Naive thymus-derived CD4-positive, alpha-beta T cell (primary cell): ENCODE measurements at regions of chr5 and their contacts with region 1.

Region 1: DNA sequence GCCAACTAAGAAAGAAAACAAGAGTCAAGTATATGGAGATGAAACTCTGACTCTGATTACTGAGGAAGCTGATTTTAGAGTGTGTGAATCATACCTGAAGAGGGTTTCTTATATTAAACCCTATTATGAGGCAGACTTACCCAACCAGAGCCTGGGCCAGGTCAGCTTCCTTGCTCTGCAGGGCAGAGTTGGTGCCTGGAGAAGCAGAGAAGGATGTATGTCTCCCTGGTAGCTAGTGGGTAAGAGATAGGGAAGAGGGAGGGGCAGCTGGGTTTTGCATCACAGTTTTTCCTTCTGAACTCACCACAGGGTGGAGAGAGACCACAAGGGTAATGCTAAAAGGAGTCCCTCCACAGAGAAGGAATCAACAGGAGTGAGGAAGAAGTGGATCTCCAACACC is 104.1 kb downstream of the CMYA5 start:
- DNase-seq: no peak
- ATAC-seq: no peak
- H3K4me3 ChIP-seq: no peak overlapping the region
- H3K4me3 Mint-ChIP-seq: no peak overlapping the region
- H3K27ac ChIP-seq: no peak overlapping the region
- H3K27ac Mint-ChIP-seq: no peak overlapping the region
- H3K4me1 ChIP-seq: no peaks in the 10 kb centered on the region
- H3K4me1 Mint-ChIP-seq: peaks cover 0 to 1% (median 0%) of the 10 kb centered on the region in 7 donors
- H3K27me3 ChIP-seq: no peaks in the 10 kb centered on the region
- H3K27me3 Mint-ChIP-seq: peaks cover 0 to 10% (median 0%) of the 10 kb centered on the region in 5 donors

Region 2: DNA sequence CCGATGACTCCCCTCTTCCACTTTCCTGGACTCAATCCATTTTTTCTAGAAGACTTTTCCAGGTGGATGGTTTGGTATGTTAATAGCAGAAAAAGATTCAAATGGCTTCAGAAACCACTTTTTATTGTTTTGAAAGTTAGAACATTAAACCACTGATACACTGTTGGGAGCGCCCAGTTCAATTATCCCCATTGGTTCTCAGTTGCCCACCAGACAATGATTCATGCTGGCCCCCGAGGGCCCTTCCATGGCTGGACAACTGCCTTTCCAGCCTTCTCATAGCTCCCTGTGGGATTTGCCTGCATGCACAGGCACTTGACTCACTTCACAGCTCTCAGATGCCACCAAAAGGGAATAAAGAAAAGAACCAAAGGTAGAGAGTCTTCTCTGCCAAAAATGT is 797.6 kb after region 1 on chr5:
- CTCF ChIA-PET with region 1: no interaction called
- POLR2A ChIA-PET with region 1: no interaction called
- intact Hi-C with region 1: loop called in 1 of 2 experiments (anchors 5 kb)
- DNase-seq: no peak
- ATAC-seq: no peak
- H3K4me3 ChIP-seq: no peak overlapping the region
- H3K4me3 Mint-ChIP-seq: no peak overlapping the region
- H3K27ac ChIP-seq: no peak overlapping the region
- H3K27ac Mint-ChIP-seq: no peak overlapping the region
- H3K4me1 ChIP-seq: no peaks in the 10 kb centered on the region
- H3K4me1 Mint-ChIP-seq: no peaks in the 10 kb centered on the region
- H3K27me3 ChIP-seq: no peaks in the 10 kb centered on the region
- H3K27me3 Mint-ChIP-seq: peaks cover 0 to 11% (median 9%) of the 10 kb centered on the region in 5 donors